Upper lobe of right lung (tissue), 1 donor: ENCODE measurements at regions of chr17 and their contacts with region 1.

Region 1: GRCh38 chr17:75904749-75905521 is at the start of gene MRPL38:
- DNase-seq: peak; percentile 98
- ATAC-seq: peak; percentile 95
- H3K4me3 ChIP-seq: peak within 1 kb of the TSS; percentile 94
- H3K27ac ChIP-seq: peak within 1 kb of the TSS; percentile 94
- H3K4me1 ChIP-seq: peaks cover 18% of the 10 kb centered on the region
- H3K27me3 ChIP-seq: no peaks in the 10 kb centered on the region
- CTCF ChIP-seq: peak; percentile 97
- total RNA-seq, gene MRPL38: 85.5 TPM

Region 2: DNA sequence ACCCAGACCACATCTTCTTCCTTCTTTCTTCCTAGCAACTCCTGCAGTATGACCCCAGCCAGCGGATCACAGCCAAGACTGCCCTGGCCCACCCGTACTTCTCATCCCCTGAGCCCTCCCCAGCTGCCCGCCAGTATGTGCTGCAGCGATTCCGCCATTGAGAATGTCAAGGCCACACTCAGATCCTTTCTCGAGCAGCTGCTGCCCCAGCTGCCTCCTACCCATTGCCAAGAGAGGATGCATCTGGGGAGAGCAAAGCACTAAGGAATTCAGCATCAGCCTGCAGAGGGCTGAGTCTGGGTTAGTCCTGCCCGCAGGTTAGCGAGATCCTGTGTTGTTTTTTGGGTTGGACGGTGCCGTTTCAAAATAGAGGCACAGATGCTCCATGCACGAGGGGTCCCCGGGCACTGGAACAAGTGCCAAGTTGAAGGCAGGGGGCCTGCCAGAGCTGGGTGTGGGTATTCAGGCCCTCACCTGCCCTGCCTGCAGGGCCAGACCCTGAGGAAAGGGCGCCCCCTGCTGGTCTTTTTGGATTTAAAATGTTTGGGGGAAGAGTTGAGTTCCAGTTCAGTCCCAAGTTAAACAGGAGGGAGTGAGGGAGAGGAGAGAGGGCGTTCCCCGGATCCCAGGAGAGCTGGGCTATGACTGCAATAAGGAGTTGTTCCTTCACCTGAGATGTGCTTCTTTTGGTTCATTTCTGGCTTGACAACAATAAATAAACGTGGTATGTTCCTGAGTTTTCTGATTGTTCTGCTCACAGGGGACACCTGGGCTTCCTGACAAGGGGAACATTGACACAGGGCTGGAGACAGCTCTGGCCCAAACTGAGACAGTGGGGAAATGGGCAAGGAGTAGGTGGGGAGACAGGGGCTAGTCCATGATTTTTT is 100.6 kb after region 1 on chr17:
- intact Hi-C with region 1: loop called (anchors 5 kb)
- DNase-seq: no peak
- ATAC-seq: peak; percentile 60
- H3K4me3 ChIP-seq: no peak overlapping the region
- H3K27ac ChIP-seq: peak overlapping the region; percentile 72
- H3K4me1 ChIP-seq: peaks cover 16% of the 10 kb centered on the region
- H3K27me3 ChIP-seq: no peaks in the 10 kb centered on the region
- CTCF ChIP-seq: peak; percentile 68